Kidney (tissue), 22 donors: ENCODE measurements at regions of chr13 and their contacts with region 1.

Region 1: DNA sequence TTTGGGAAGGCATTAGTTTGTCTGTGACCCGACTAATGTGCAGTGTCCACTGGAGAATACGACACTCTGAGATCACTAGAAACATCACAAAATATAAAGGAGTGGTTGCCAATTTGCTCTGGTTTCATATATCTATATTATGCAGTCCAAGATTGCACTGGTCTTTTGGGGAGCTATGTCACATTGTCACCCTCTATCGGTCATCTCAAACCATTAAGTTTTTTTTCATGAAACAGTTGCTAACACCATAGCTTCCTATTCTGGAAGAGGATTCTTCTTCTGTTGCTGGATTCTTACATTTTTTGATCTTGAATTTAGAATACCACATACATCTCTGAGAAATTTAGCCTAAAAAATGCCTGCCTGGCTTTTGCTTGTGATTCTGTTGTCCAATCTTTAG is 168.6 kb downstream of the LACC1 start:
- DNase-seq: no peak
- H3K4me3 ChIP-seq: no peak overlapping the region
- H3K27ac ChIP-seq: no peak overlapping the region
- H3K4me1 ChIP-seq: peaks cover 0 to 8% (median 4%) of the 10 kb centered on the region in 3 donors
- H3K27me3 ChIP-seq: no peaks in the 10 kb centered on the region
- CTCF ChIP-seq: no peak

Region 2: GRCh38 chr13:43686557-43686956 is 361.8 kb before region 1 on chr13:
- intact Hi-C with region 1: no loop called
- DNase-seq: no peak
- H3K4me3 ChIP-seq: no peak overlapping the region
- H3K27ac ChIP-seq: no peak overlapping the region
- H3K4me1 ChIP-seq: peaks cover 0 to 9% (median 0%) of the 10 kb centered on the region in 3 donors
- H3K27me3 ChIP-seq: no peaks in the 10 kb centered on the region
- CTCF ChIP-seq: no peak

Region 3: GRCh38 chr13:43830497-43830881 is 217.8 kb before region 1 on chr13:
- intact Hi-C with region 1: no loop called
- DNase-seq: no peak
- H3K4me3 ChIP-seq: peak overlapping the region in 1 of 3 donors; percentile 39
- H3K27ac ChIP-seq: no peak overlapping the region
- H3K4me1 ChIP-seq: no peaks in the 10 kb centered on the region
- H3K27me3 ChIP-seq: no peaks in the 10 kb centered on the region
- CTCF ChIP-seq: no peak

Region 4: GRCh38 chr13:44393391-44393790 is 345.1 kb after region 1 on chr13:
- intact Hi-C with region 1: no loop called
- DNase-seq: peak; percentile 62 to 87 (median 72)
- H3K4me3 ChIP-seq: no peak overlapping the region
- H3K27ac ChIP-seq: peak overlapping the region in 1 of 2 donors; percentile 41
- H3K4me1 ChIP-seq: peaks cover 7 to 10% (median 9%) of the 10 kb centered on the region in 3 donors
- H3K27me3 ChIP-seq: no peaks in the 10 kb centered on the region
- CTCF ChIP-seq: no peak

Region 5: GRCh38 chr13:44439452-44440024 is 391.2 kb after region 1 on chr13:
- intact Hi-C with region 1: loop called (anchors 10 kb)
- DNase-seq: no peak
- H3K4me3 ChIP-seq: no peak overlapping the region
- H3K27ac ChIP-seq: no peak overlapping the region
- H3K4me1 ChIP-seq: peaks cover under 1 to 9% (median 6%) of the 10 kb centered on the region in 3 donors
- H3K27me3 ChIP-seq: no peaks in the 10 kb centered on the region
- CTCF ChIP-seq: no peak